Activated CD4-positive, alpha-beta T cell treated with anti-CD3 and anti-CD28 coated beads for 36 hours (primary cell): ENCODE measurements at regions of chr1 and their contacts with region 1.

Region 1: DNA sequence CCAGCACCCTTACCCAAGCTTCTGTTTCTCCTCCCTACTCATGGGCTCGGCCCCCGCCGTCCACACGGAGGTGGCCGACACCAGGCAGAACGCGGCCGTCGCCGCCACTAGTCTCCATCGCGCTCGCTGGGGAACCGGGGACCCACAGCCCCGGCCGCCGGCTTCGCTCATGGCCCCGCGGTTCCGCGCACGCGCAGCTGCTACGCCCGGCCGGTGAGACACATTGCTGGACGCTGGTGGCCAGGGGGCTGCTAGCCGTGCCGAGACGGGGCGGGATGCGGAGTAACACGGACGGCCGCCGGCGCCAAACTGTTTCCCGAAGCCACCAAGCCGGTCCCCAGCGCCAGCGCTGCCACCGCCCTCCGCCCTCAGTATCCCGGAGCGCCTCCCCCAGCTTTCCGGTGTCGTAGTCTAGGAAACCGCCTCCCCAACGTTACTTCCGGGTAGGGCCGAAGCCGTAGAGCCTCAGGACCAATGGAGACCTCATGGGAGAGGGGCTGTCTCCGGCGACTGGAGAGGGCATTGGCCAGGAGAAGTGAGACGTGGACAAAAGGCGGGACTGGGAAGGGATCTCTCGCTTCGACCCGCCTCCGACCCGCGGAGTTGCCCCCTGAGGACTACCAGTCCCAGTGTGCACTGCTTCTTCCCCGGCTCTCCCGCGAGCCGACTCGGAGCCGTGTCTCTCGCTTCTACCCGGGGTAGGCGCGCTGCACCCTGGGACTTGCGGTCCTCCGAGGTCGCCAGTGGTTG is at the start of gene EDEM3:
- DNase-seq: peak; percentile 98
- ATAC-seq: peak; percentile 95
- H3K4me3 Mint-ChIP-seq: peak within 1 kb of the TSS; percentile 95
- H3K27ac Mint-ChIP-seq: peak within 1 kb of the TSS; percentile 93
- H3K4me1 Mint-ChIP-seq: peaks cover 44% of the 10 kb centered on the region
- H3K27me3 Mint-ChIP-seq: peaks cover 3% of the 10 kb centered on the region
- total RNA-seq, gene EDEM3: 14.0 to 15.2 TPM

Region 2: DNA sequence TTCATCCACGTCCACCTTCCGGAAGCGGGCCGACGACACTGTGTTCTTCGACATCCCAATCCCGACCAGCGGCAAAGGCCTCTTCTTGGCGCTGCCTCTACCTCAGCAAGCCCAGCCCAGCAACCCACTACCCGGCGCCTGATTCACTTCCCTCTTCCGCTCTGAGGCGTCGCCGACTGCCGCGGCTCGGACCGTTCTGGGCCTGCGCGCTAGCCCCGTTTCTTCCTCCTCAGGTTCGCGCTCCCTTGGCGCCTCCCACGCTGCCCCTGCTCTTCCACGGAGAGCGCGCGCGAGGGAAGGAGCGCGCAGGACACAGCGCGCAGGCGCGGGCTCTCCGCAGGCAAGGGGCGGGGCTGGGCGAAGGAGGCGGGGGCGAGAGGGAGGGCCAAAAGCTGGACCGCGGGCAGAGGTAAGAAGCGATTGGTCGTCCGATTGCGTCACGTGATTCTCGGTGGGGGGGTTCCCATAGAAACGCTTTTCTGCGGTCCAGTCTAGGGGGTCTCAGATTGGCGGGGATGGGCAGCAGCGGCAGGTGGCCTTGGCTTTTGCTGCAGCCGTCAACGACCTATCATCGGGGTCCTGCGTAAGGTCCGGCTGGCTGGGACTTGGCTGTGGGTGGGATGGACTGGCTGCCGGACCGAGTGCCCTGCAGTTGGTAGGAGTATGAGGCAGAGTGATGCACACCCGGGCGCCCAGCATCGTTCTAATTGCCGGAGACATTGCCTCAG is 1118.9 kb before region 1 on chr1 and contains the start of gene ARPC5:
- CTCF ChIA-PET with region 1: no interaction called
- POLR2A ChIA-PET with region 1: no interaction called
- intact Hi-C with region 1: loop called in 1 of 2 experiments (anchors 10 kb)
- DNase-seq: peak; percentile 98
- ATAC-seq: peak; percentile 90
- H3K4me3 Mint-ChIP-seq: peak within 1 kb of the TSS; percentile 97
- H3K27ac Mint-ChIP-seq: peak within 1 kb of the TSS; percentile 100
- H3K4me1 Mint-ChIP-seq: peaks cover 32% of the 10 kb centered on the region
- H3K27me3 Mint-ChIP-seq: no peaks in the 10 kb centered on the region
- total RNA-seq, gene ARPC5: 115 to 165 TPM

Region 3: DNA sequence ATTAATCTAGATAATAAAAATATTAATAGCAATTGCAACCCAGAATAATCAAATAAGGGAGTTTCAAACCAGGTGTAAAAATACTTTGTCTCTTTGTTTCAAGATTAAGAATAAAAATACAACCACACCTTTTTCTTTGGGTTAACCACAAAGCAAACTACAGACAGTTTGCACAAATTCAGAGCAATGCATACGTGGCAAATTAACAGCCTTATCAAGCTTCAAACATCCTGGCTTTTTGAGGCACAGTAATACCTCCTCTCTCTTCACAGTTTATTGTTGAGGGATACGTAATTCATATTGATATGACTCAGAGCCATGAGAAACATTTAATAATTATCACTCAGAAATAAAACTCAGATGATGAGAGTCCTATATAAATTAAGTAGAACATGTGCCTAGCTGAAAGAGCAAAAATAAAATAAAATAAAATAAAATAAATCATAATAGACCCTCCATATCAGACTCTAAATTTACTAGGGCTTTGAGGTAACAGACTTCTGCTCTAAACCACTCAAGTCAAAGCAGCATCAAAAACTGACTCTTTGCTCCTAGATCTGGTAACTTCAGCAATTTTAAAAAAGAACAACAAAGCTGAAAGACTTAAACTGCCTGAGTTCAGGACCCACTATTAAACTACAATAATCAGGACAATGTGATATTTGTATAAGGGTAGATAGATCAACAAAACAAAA is 11.4 kb before region 1 on chr1:
- CTCF ChIA-PET with region 1: interaction called, 10 read pairs
- POLR2A ChIA-PET with region 1: no interaction called
- intact Hi-C with region 1: loop called (anchors 1 kb)
- DNase-seq: no peak
- ATAC-seq: peak; percentile 90
- H3K4me3 Mint-ChIP-seq: no peak overlapping the region
- H3K27ac Mint-ChIP-seq: peak overlapping the region; percentile 88
- H3K4me1 Mint-ChIP-seq: peaks cover 59% of the 10 kb centered on the region
- H3K27me3 Mint-ChIP-seq: no peaks in the 10 kb centered on the region

Region 4: DNA sequence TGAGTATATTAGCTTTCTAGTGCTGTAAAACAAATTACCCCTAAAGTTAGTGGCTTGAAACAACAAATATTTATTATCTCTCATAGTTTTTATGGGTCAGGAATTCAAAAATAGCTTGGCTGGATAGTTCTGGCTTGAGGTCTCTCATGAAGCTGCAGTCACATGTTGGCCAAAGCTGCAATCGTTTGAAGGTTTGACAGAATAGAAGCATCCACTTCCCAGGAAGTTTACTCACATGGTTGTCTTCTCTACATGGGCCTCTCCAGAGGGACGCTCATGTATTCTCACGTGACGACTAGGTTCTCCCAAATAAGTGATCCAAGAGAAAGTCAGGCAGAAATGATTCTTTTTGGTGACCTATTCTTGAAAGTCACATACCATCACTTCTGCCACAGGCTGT is 120.6 kb after region 1 on chr1:
- CTCF ChIA-PET with region 1: no interaction called
- POLR2A ChIA-PET with region 1: no interaction called
- intact Hi-C with region 1: no loop called
- DNase-seq: no peak
- ATAC-seq: no peak
- H3K4me3 Mint-ChIP-seq: no peak overlapping the region
- H3K27ac Mint-ChIP-seq: no peak overlapping the region
- H3K4me1 Mint-ChIP-seq: peaks cover 7% of the 10 kb centered on the region
- H3K27me3 Mint-ChIP-seq: peaks cover 9% of the 10 kb centered on the region

Region 5: GRCh38 chr1:184892116-184892515 is 137.5 kb after region 1 on chr1:
- CTCF ChIA-PET with region 1: no interaction called
- POLR2A ChIA-PET with region 1: interaction called, 3 read pairs
- intact Hi-C with region 1: loop called in 1 of 2 experiments (anchors 5 kb)
- DNase-seq: peak; percentile 48
- ATAC-seq: peak; percentile 74
- H3K4me3 Mint-ChIP-seq: no peak overlapping the region
- H3K27ac Mint-ChIP-seq: peak overlapping the region; percentile 67
- H3K4me1 Mint-ChIP-seq: peaks cover 52% of the 10 kb centered on the region
- H3K27me3 Mint-ChIP-seq: no peaks in the 10 kb centered on the region

Region 6: DNA sequence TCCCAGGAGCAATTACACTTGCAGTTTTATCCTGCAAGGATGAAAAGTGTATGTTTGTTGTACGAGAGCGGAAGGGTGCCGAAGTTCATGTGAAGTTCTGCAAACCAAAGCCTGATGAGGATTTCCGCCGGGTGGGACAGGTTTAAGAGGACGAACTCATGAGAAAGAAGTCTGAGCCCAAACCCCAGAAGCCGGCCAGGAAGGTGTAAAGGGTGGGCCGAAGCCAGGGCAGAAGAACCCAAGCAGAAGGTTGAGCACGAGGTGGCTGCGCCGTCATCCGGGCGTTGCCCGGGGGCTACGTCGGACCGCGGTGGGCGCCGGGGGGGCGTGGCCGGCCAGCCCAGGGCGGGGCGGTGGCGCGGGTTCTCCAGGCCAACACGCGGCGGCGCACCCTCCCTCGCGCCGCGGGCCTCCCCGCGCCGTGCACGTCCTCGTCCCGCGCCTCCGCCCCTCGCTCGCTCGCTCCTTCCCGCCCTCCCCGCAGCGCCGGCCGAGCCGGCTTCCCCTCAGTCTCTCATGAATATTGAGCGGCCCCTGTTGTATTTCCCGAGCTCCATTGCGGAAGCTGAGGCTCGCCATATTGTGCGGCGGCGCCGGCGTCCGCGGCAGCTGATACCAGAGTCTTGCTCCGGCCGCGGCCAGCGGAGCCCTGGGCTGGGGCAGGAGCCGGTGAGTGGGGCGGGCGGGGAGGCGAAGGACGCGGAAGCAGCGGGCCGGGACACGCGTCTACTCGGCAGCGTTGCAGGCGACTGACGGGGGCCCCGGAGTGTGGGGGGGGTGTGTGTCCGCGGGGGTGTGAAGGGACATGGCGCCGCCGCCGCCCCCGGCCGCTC is 290.5 kb after region 1 on chr1 and contains the start of gene RNF2:
- CTCF ChIA-PET with region 1: interaction called, 3 read pairs
- POLR2A ChIA-PET with region 1: no interaction called
- intact Hi-C with region 1: loop called (anchors 1 to 5 kb)
- DNase-seq: peak; percentile 87
- ATAC-seq: peak; percentile 87
- H3K4me3 Mint-ChIP-seq: peak within 1 kb of the TSS; percentile 94
- H3K27ac Mint-ChIP-seq: peak within 1 kb of the TSS; percentile 86
- H3K4me1 Mint-ChIP-seq: peaks cover 34% of the 10 kb centered on the region
- H3K27me3 Mint-ChIP-seq: no peaks in the 10 kb centered on the region
- total RNA-seq, gene RNF2: 19.6 to 23.6 TPM

Region 7: GRCh38 chr1:185559684-185560331 is 805.2 kb after region 1 on chr1:
- CTCF ChIA-PET with region 1: no interaction called
- POLR2A ChIA-PET with region 1: no interaction called
- intact Hi-C with region 1: loop called in 1 of 2 experiments (anchors 10 kb)
- DNase-seq: peak; percentile 68
- ATAC-seq: peak; percentile 90
- H3K4me3 Mint-ChIP-seq: no peak overlapping the region
- H3K27ac Mint-ChIP-seq: peak overlapping the region; percentile 59
- H3K4me1 Mint-ChIP-seq: peaks cover 42% of the 10 kb centered on the region
- H3K27me3 Mint-ChIP-seq: no peaks in the 10 kb centered on the region